Right ventricle myocardium inferior (tissue), 1 donor: ENCODE measurements at regions of chr2 and their contacts with region 1.

Region 1: DNA sequence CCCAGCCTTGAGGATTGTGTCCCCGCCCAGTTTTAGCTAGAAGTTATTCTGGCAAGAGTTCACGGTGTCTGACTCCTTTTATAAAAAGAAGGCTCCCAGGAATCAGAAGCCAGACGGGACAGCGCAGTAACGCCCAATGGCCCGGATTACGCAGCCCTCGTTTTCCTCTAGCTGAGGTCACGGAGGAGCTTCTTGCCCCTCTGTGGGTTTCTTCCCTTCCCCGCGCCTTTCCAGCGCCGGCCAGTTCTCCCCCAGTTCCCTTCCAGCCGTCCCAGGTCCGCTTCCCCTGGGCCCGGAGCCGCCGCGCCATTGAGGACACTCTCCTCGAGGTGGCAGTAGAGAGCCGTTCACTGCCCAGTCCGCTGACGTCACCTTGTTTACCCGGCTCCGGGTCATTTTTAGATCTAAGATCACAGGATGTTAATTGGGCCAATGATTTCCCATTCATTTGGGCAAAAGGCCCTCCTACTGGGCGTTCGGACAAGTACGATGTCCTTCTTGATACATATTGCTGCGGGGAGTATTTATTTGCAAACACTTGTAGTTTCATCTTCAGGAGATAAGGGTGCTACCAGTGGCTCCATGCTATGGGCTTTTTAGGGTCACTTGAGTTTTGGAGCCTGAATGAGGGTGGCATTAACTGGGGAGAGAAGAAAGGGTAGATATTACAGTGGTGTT is 81.5 kb upstream of the PPM1B start:
- DNase-seq: peak; percentile 96
- ATAC-seq: peak; percentile 94

Region 2: DNA sequence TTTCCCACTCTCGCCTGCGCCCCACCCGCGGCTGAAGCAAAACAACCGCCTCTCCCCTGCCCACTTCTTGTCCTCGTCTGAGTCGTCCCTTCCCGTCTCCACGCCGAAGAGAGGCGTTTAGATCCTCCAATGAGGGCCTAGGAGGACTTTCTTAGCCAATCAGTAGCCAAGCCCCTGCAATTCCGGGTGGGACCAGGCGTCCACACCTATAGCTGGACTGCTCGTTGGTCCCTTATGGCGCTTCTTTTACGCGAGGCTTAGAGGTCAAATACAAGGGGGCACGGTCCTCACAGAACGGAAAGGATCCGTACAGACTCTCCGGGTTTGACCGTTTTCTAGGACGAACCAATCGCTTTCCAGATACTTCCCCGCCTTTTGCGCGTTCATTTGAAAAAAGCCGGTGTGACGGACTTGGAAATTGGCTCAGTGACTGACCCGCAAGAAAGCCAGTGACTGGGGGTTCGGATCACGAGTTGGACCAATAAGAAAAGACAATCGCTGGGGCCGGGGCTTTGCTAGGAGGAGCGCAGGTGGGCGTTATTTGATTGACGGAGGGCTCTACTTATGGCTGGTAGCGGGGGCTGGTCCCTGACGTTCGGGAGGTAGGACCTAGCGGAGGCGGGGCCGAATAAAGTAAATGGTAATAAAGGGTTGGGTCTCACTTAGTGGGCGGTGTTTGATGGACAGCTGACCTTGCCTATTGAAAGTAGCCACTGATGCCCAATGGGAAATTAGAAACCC is 80.9 kb after region 1 on chr2:
- intact Hi-C with region 1: loop called (anchors 5 kb)
- DNase-seq: peak; percentile 99
- ATAC-seq: peak; percentile 95

Region 3: GRCh38 chr2:44244129-44244871 is 157.1 kb after region 1 on chr2:
- intact Hi-C with region 1: loop called (anchors 2 kb)
- DNase-seq: no peak
- ATAC-seq: peak; percentile 63

Region 4: GRCh38 chr2:44291281-44292248 is 204.4 kb after region 1 on chr2:
- intact Hi-C with region 1: loop called (anchors 5 kb)
- DNase-seq: no peak
- ATAC-seq: peak; percentile 50

Region 5: GRCh38 chr2:44361330-44362206 is 274.4 kb after region 1 on chr2 and contains the starts of genes CAMKMT and PREPL:
- intact Hi-C with region 1: loop called (anchors 10 kb)
- DNase-seq: peak; percentile 99
- ATAC-seq: peak; percentile 98
- total RNA-seq, gene CAMKMT: 4.6 TPM
- total RNA-seq, gene PREPL: 76.7 TPM